ENCODE measurements at regions of chr10 and their contacts with region 1.

Region 1: DNA sequence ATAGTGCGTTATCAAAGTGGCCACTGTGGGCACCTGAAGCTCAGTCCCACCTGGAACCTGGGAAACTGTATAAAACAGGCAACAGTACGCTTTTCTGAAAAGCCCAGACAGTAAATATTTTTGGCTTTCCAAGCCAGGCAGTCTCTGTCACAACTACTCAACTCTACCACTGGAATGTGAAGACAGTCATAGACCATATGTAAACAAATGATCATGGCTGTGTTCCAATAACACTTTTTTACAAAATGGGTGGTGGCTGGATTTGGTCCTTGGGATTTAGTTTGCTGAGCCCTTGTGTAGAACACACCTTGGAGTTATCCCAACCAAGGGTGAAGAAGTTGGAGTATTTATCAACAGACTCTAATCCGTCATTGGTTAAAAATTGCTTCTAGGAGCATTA is 259.9 kb downstream of the SKIDA1 start:
- DNase-seq: peak; percentile 93
- ATAC-seq: peak; percentile 90
- H3K4me3 ChIP-seq: no peak overlapping the region
- H3K27ac ChIP-seq: peak overlapping the region; percentile 34
- H3K4me1 ChIP-seq: peaks cover 13% of the 10 kb centered on the region
- H3K27me3 ChIP-seq: no peaks in the 10 kb centered on the region
- CTCF ChIP-seq: no peak

Region 2: GRCh38 chr10:21002097-21002878 is 263.3 kb before region 1 on chr10:
- CTCF ChIA-PET with region 1: no interaction called
- POLR2A ChIA-PET with region 1: no interaction called
- intact Hi-C with region 1: loop called (anchors 10 kb)
- DNase-seq: peak; percentile 86
- ATAC-seq: peak; percentile 93
- H3K4me3 ChIP-seq: peak overlapping the region; percentile 46
- H3K27ac ChIP-seq: peak overlapping the region; percentile 99
- H3K4me1 ChIP-seq: peaks cover 21% of the 10 kb centered on the region
- H3K27me3 ChIP-seq: no peaks in the 10 kb centered on the region
- CTCF ChIP-seq: no peak

Region 3: GRCh38 chr10:21135023-21135931 is 130.3 kb before region 1 on chr10:
- CTCF ChIA-PET with region 1: no interaction called
- POLR2A ChIA-PET with region 1: no interaction called
- intact Hi-C with region 1: loop called (anchors 1 kb)
- DNase-seq: peak; percentile 94
- ATAC-seq: peak; percentile 92
- H3K4me3 ChIP-seq: peak overlapping the region; percentile 56; the same call in 1 of the 2 replicates
- H3K27ac ChIP-seq: peak overlapping the region; percentile 98
- H3K4me1 ChIP-seq: peaks cover 28% of the 10 kb centered on the region
- H3K27me3 ChIP-seq: no peaks in the 10 kb centered on the region
- CTCF ChIP-seq: no peak

Region 4: DNA sequence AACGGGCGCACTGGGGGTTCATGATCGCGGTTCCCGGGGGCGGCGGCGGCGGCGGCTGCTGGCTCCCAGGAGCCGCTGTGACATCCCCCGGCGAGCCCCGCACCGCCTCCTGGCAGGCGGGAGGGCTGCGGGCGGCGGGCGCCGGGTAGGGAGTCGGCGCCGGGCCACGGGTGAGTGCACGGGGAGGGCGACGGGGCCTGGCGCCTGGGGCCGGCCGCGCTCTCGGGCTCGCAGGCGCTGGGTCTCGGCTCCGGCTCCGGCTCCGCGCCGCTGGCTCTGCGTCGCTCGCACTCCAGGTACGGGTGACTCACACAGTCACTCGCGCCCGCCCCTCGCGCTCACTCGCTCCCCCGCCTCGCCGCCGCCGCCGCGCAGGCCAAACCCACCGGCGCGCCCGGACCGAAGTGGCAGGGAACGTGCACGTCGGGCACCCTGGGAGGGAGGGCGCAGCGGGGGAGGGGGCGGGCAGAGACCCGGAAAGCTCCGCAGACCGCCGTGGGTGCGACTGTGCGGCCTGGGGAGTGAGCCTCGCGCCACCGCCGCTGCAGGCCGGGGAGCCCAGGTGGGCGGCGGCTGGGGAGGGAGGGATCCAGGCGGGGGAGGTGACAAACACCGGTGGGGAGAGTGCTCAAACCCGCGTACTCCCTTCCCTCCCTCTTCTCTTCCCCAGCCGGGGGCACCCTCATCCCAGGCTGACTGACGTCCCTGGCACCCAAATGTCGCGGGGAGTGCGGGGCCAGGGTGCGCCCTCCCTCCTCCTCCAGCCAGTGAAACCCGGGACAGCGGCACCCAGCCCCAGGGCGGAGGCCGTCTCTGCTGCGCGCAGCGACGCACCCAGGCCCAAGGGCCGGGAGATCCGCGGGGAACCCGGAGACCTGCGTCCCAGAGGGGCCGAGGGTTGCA is 91.6 kb before region 1 on chr10:
- CTCF ChIA-PET with region 1: no interaction called
- POLR2A ChIA-PET with region 1: no interaction called
- intact Hi-C with region 1: loop called (anchors 2 kb)
- DNase-seq: peak; percentile 77
- ATAC-seq: peak; percentile 72
- H3K4me3 ChIP-seq: peak overlapping the region; percentile 91
- H3K27ac ChIP-seq: peak overlapping the region; percentile 79
- H3K4me1 ChIP-seq: peaks cover 34% of the 10 kb centered on the region
- H3K27me3 ChIP-seq: no peaks in the 10 kb centered on the region
- CTCF ChIP-seq: no peak

Region 5: GRCh38 chr10:21194464-21194993 is 71.1 kb before region 1 on chr10:
- CTCF ChIA-PET with region 1: no interaction called
- POLR2A ChIA-PET with region 1: no interaction called
- intact Hi-C with region 1: loop called (anchors 2 kb)
- DNase-seq: peak; percentile 85
- ATAC-seq: peak; percentile 86
- H3K4me3 ChIP-seq: peak overlapping the region; percentile 32; the same call in 1 of the 2 replicates
- H3K27ac ChIP-seq: peak overlapping the region; percentile 77
- H3K4me1 ChIP-seq: peaks cover 38% of the 10 kb centered on the region
- H3K27me3 ChIP-seq: no peaks in the 10 kb centered on the region
- CTCF ChIP-seq: no peak